Activated T-helper 2 cell treated with anti-CD3 and anti-CD28 coated beads, Interferon-gamma antibody, Interleukin-2, Interleukin-4, amounts not matched to agents 10 μg/mL and 5 μg/mL and 100 μg/mL, durations not matched to agents 14 hours and 24 hours and 36 hours (primary cell): ENCODE measurements at regions of chr6 and their contacts with region 1.

Region 1: DNA sequence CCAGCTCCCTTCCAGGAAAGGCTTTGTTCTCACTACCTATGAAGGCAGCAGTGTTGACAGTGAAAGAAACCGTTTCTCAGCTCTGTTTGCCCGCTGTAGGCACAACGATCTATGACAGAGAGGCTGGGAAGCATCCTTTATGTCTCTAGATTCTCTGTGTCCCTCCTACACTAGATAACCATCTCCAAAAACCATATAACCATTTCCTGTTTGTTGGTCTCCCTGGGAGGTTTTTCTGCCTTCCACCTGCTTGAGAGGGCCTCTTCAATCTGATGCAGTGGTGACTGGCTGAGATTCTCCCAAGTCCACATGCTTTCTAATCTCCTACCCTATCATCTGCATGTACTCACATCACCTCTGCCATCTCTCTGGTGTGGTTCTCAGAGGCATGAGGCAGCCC is 32.0 kb upstream of the TMEM217 start:
- DNase-seq: peak; percentile 64
- H3K4me3 Mint-ChIP-seq: peak overlapping the region; percentile 35
- H3K27ac Mint-ChIP-seq: peak overlapping the region; percentile 78
- H3K4me1 Mint-ChIP-seq: peaks cover 51% of the 10 kb centered on the region
- H3K27me3 Mint-ChIP-seq: no peaks in the 10 kb centered on the region

Region 2: GRCh38 chr6:37272834-37273566 is 16.9 kb before region 1 on chr6:
- intact Hi-C with region 1: loop called (anchors 1 kb)
- DNase-seq: no peak
- H3K4me3 Mint-ChIP-seq: peak overlapping the region; percentile 49
- H3K27ac Mint-ChIP-seq: peak overlapping the region; percentile 66
- H3K4me1 Mint-ChIP-seq: peaks cover 64% of the 10 kb centered on the region
- H3K27me3 Mint-ChIP-seq: no peaks in the 10 kb centered on the region